ENCODE measurements at regions of chr1 and their contacts with region 1.

Region 1: DNA sequence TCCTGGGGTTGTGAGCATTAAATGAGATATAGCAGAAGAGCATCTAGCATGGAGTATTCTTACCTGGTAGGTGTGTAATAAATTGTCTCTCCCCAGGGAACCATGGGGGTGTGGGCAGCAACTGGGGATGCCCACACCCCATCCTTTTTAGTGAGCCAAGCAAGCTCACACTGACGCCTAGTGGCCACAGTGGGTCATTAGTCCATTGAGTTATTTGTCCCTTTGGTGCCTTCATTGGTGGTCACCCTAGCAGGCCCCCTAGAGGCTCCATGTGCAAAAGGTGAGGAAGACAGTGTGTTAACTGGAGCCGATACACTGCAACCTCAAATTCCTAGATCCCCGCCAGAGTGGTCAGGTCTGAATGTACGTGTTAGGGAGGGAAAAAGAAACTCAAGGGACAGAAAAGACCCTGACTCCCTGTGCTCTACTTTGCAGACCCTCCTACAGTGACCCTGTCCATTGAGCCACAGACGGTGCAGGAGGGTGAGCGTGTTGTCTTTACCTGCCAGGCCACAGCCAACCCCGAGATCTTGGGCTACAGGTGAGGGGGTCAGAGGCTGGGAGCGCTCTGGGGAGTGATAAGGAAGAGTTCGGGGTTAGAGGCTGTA is 93.3 kb upstream of the CD1D start:
- DNase-seq: peak in 1 of 2 donors; percentile 51
- H3K4me3 ChIP-seq: no peak overlapping the region
- H3K27ac ChIP-seq: no peak overlapping the region
- H3K4me1 ChIP-seq: no peaks in the 10 kb centered on the region
- H3K27me3 ChIP-seq: no peaks in the 10 kb centered on the region
- CTCF ChIP-seq: peak; percentile 76 to 85

Region 2: DNA sequence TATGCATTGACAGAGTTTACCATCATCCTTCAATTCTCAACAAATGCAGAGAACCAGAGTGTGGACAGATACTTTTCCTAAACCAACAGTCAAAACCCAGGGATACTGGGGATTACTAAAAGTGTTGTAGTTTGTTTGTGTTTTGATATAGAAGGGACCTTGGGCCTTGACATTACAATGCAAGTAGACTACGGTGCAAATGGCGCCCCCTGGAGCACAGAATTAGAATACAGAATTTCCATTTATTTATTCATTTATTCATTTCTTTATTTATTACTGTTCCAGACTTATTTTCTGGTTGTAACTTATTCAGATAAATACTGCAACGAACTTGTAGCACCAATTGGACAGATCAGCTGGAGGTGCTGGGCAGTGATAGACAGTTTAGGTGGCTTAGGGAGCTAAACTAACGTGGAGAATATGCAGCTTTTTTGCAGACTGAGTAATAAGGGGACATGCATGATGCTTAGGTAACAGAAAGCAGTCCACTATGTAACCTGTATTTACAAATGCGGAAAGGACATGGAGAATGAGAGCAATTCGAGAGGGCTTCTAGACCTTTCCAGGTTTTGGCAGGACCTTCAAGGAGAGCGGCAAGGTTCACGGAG is 51.3 kb before region 1 on chr1:
- intact Hi-C with region 1: loop called (anchors 5 kb)
- DNase-seq: no peak
- H3K4me3 ChIP-seq: no peak overlapping the region
- H3K27ac ChIP-seq: peak overlapping the region in 1 of 2 donors; percentile 32
- H3K4me1 ChIP-seq: peaks cover 0 to 61% (median 43%) of the 10 kb centered on the region in 4 donors
- H3K27me3 ChIP-seq: no peaks in the 10 kb centered on the region
- CTCF ChIP-seq: peak; percentile 69 to 73

Measured in tibial artery (tissue), 4 donors.